ENCODE measurements at regions of chr1 and their contacts with region 1.

Region 1: GRCh38 chr1:32361674-32362473 is 411 bp downstream of the FAM229A start:
- DNase-seq: peak in 6 of 10 donors; percentile 18 to 32 (median 29)
- ATAC-seq: peak; percentile 58 to 62
- H3K4me3 Mint-ChIP-seq: peak overlapping the region in 8 of 10 donors; percentile 15 to 83 (median 58)
- H3K27ac Mint-ChIP-seq: peak overlapping the region in 2 of 10 donors; percentile 18 to 50
- H3K4me1 Mint-ChIP-seq: peaks cover 16 to 37% (median 25%) of the 10 kb centered on the region in 4 donors
- H3K27me3 Mint-ChIP-seq: peaks cover 0 to 3% (median 0%) of the 10 kb centered on the region in 5 donors

Region 2: GRCh38 chr1:32345289-32345827 is 16.5 kb before region 1 on chr1:
- POLR2A ChIA-PET with region 1: interaction called, 11 read pairs
- DNase-seq: peak in 7 of 10 donors; percentile 26 to 74 (median 46)
- ATAC-seq: peak; percentile 86 to 89
- H3K4me3 Mint-ChIP-seq: peak overlapping the region in 7 of 10 donors; percentile 14 to 70 (median 49)
- H3K27ac Mint-ChIP-seq: peak overlapping the region in 9 of 10 donors; percentile 19 to 93 (median 72)
- H3K4me1 Mint-ChIP-seq: peaks cover 27 to 55% (median 48%) of the 10 kb centered on the region in 4 donors
- H3K27me3 Mint-ChIP-seq: no peaks in the 10 kb centered on the region

Measured in naive thymus-derived CD8-positive, alpha-beta T cell (primary cell).